GM12878 (cell line): ENCODE measurements at regions of chr7 and their contacts with region 1.

Region 1: GRCh38 chr7:15720849-15721471 is 34.5 kb upstream of the MEOX2 start:
- DNase-seq: no peak
- ATAC-seq: no peak
- H3K4me3 ChIP-seq: no peak overlapping the region
- H3K27ac ChIP-seq: no peak overlapping the region
- H3K4me1 ChIP-seq: no peaks in the 10 kb centered on the region
- H3K27me3 ChIP-seq: no peaks in the 10 kb centered on the region
- CTCF ChIP-seq: peak; percentile 53 to 77 (median 64)
- EP300 ChIP-seq: no peak
- POLR2A ChIP-seq: no peak
- RAD21 ChIP-seq: peak; percentile 57

Region 2: DNA sequence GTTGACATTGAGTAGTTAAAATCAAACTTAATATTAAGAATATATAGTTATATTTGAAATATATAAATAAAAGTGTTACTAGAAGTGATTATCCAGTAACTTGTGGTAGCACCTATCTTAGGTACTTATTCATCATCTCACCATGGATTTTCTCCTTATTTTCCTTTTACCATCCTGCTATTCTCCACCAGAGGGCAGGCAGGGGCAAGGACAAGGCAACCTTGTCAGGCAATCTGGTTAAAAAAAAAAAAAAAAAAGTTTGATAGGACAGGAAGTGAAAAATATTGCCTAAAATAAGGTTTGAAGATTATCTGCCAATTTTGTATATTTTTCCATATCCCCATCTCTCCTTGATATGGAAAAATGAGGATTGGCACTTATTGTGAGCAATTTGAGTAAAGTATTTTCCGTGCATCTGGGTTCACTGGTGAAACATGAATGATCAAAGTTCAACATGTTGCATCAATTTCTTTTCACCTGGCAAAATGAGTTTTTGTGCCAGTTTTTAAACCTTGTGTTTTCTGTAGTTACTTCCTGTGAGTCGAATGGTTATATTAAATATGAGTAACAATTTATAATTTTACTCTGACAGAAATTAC is 415.9 kb before region 1 on chr7:
- CTCF ChIA-PET with region 1: interaction called, 27 read pairs
- POLR2A ChIA-PET with region 1: no interaction called
- RAD21 ChIA-PET with region 1: interaction called, 8 read pairs
- SMC1A ChIA-PET with region 1: interaction called, 5 read pairs
- in situ Hi-C with region 1: loop called (anchors 10 kb)
- intact Hi-C with region 1: loop called (anchors 2 kb)
- DNase-seq: no peak
- ATAC-seq: peak; percentile 68
- H3K4me3 ChIP-seq: no peak overlapping the region
- H3K27ac ChIP-seq: no peak overlapping the region
- H3K4me1 ChIP-seq: no peaks in the 10 kb centered on the region
- H3K27me3 ChIP-seq: no peaks in the 10 kb centered on the region
- CTCF ChIP-seq: peak; percentile 53 to 64 (median 64)
- EP300 ChIP-seq: no peak
- POLR2A ChIP-seq: no peak
- RAD21 ChIP-seq: peak; percentile 59

Region 3: DNA sequence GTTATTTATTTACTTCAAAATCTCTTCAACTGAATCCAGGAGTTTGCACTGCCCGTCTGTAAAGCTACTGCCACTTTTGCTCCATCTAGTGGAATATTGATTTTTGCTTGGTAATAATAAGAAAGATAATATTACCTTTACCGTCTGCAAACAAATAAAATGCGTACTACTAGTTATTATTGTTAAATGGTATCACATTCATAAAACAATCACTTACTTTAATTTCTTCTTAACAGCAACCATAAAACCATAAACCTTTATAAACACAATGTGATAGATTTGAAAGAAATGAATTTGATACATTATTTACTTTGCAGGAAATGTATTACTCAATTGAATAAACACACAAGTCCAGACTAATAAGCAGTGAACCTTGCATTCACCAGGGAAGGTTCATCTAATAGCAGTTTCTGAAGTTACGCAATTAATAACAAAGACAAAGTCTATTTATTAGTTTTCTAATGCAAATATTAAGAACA is 165.5 kb before region 1 on chr7:
- CTCF ChIA-PET with region 1: interaction called, 55 read pairs
- POLR2A ChIA-PET with region 1: no interaction called
- RAD21 ChIA-PET with region 1: interaction called, 37 read pairs
- SMC1A ChIA-PET with region 1: interaction called, 32 read pairs
- in situ Hi-C with region 1: no loop called
- intact Hi-C with region 1: no loop called
- DNase-seq: no peak
- ATAC-seq: no peak; the same call in 2 of the 3 replicates
- H3K4me3 ChIP-seq: no peak overlapping the region
- H3K27ac ChIP-seq: no peak overlapping the region
- H3K4me1 ChIP-seq: no peaks in the 10 kb centered on the region
- H3K27me3 ChIP-seq: no peaks in the 10 kb centered on the region
- CTCF ChIP-seq: no peak; a peak in 1 of 6 replicates
- EP300 ChIP-seq: no peak
- POLR2A ChIP-seq: no peak
- RAD21 ChIP-seq: no peak

Region 4: DNA sequence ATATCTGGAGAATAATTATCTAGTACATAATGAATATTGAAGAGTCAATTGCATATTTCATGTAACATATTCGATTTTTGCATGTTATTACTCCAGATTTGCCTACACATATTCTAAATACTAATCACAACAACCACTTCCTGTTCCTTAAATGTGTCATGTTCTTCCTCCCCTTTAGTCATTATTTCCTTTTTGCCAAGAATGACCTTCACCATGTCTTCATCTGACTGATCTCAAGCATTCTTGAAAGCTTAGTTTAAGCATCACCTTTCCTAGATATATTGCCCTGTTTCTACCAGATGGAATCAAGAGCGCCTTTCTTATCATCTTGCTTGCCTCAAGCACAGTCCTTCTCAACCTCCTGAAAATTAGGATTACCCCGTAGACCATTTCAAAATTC is 11.0 kb before region 1 on chr7:
- CTCF ChIA-PET with region 1: interaction called, 21 read pairs
- POLR2A ChIA-PET with region 1: no interaction called
- RAD21 ChIA-PET with region 1: no interaction called
- SMC1A ChIA-PET with region 1: interaction called, 11 read pairs
- in situ Hi-C with region 1: no loop called
- intact Hi-C with region 1: no loop called
- DNase-seq: no peak
- ATAC-seq: no peak; the same call in 1 of the 3 replicates
- H3K4me3 ChIP-seq: no peak overlapping the region
- H3K27ac ChIP-seq: no peak overlapping the region
- H3K4me1 ChIP-seq: no peaks in the 10 kb centered on the region
- H3K27me3 ChIP-seq: no peaks in the 10 kb centered on the region
- CTCF ChIP-seq: no peak
- EP300 ChIP-seq: no peak
- POLR2A ChIP-seq: no peak
- RAD21 ChIP-seq: no peak

Region 5: GRCh38 chr7:16071246-16071857 is 350.4 kb after region 1 on chr7:
- CTCF ChIA-PET with region 1: interaction called, 9 read pairs
- POLR2A ChIA-PET with region 1: no interaction called
- RAD21 ChIA-PET with region 1: no interaction called
- SMC1A ChIA-PET with region 1: interaction called, 3 read pairs
- in situ Hi-C with region 1: no loop called
- intact Hi-C with region 1: loop called (anchors 5 kb)
- DNase-seq: no peak
- ATAC-seq: peak; percentile 85
- H3K4me3 ChIP-seq: no peak overlapping the region
- H3K27ac ChIP-seq: no peak overlapping the region
- H3K4me1 ChIP-seq: no peaks in the 10 kb centered on the region
- H3K27me3 ChIP-seq: no peaks in the 10 kb centered on the region
- CTCF ChIP-seq: peak; percentile 40 to 66 (median 65); a peak in 5 of 6 replicates
- EP300 ChIP-seq: no peak
- POLR2A ChIP-seq: no peak
- RAD21 ChIP-seq: peak; percentile 84

Region 6: GRCh38 chr7:16091701-16092310 is 370.8 kb after region 1 on chr7:
- CTCF ChIA-PET with region 1: no interaction called
- POLR2A ChIA-PET with region 1: no interaction called
- RAD21 ChIA-PET with region 1: no interaction called
- SMC1A ChIA-PET with region 1: no interaction called
- in situ Hi-C with region 1: no loop called
- intact Hi-C with region 1: no loop called
- DNase-seq: no peak
- ATAC-seq: no peak
- H3K4me3 ChIP-seq: no peak overlapping the region
- H3K27ac ChIP-seq: no peak overlapping the region
- H3K4me1 ChIP-seq: no peaks in the 10 kb centered on the region
- H3K27me3 ChIP-seq: no peaks in the 10 kb centered on the region
- CTCF ChIP-seq: no peak
- EP300 ChIP-seq: no peak
- POLR2A ChIP-seq: no peak
- RAD21 ChIP-seq: no peak